ENCODE measurements at regions of chr7 and their contacts with region 1.

Region 1: GRCh38 chr7:135558337-135558767 is 635 bp downstream of the NUP205 start:
- DNase-seq: peak; percentile 46
- ATAC-seq: peak; percentile 56
- H3K4me3 Mint-ChIP-seq: no peak overlapping the region
- H3K27ac Mint-ChIP-seq: no peak overlapping the region
- H3K4me1 Mint-ChIP-seq: peaks cover 16% of the 10 kb centered on the region
- H3K27me3 Mint-ChIP-seq: no peaks in the 10 kb centered on the region
- CTCF ChIP-seq: peak; percentile 29

Region 2: DNA sequence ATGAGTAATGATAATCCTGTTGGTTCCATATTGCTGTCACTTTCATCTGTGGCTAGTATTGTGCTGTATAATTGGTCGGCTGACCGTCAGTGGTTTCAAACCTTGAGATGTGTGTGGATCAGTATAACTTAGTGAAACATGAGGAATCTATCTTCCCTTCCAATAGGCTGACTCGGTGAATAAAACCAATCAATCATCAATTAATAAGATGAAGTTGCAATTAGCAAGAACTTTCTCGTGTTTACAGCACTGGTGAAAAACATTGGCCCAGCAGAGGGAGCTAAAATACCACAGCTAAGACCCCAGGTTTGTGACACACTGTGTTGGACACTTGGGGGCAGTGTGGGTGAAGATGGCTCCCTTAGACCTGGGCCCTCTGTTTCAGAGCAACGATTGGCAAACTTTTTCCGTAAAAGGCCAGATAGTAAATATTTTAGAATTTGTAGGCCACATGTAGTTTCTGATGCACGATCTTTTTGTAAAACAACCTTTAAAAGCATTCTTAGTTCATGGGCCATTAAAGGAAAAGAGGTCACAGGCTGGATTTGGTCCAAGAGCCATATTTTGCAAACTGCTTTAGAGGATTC is 276.9 kb before region 1 on chr7:
- CTCF ChIA-PET with region 1: interaction called, 7 read pairs
- POLR2A ChIA-PET with region 1: no interaction called
- intact Hi-C with region 1: loop called (anchors 1 kb)
- DNase-seq: peak; percentile 24
- ATAC-seq: peak; percentile 100
- H3K4me3 Mint-ChIP-seq: no peak overlapping the region
- H3K27ac Mint-ChIP-seq: no peak overlapping the region
- H3K4me1 Mint-ChIP-seq: peaks cover 10% of the 10 kb centered on the region
- H3K27me3 Mint-ChIP-seq: peaks cover 6% of the 10 kb centered on the region
- CTCF ChIP-seq: peak; percentile 98

Region 3: GRCh38 chr7:135414850-135415439 is 143.4 kb before region 1 on chr7:
- CTCF ChIA-PET with region 1: no interaction called
- POLR2A ChIA-PET with region 1: no interaction called
- intact Hi-C with region 1: loop called (anchors 1 kb)
- DNase-seq: no peak
- ATAC-seq: no peak
- H3K4me3 Mint-ChIP-seq: no peak overlapping the region
- H3K27ac Mint-ChIP-seq: no peak overlapping the region
- H3K4me1 Mint-ChIP-seq: no peaks in the 10 kb centered on the region
- H3K27me3 Mint-ChIP-seq: no peaks in the 10 kb centered on the region
- CTCF ChIP-seq: no peak

Region 4: DNA sequence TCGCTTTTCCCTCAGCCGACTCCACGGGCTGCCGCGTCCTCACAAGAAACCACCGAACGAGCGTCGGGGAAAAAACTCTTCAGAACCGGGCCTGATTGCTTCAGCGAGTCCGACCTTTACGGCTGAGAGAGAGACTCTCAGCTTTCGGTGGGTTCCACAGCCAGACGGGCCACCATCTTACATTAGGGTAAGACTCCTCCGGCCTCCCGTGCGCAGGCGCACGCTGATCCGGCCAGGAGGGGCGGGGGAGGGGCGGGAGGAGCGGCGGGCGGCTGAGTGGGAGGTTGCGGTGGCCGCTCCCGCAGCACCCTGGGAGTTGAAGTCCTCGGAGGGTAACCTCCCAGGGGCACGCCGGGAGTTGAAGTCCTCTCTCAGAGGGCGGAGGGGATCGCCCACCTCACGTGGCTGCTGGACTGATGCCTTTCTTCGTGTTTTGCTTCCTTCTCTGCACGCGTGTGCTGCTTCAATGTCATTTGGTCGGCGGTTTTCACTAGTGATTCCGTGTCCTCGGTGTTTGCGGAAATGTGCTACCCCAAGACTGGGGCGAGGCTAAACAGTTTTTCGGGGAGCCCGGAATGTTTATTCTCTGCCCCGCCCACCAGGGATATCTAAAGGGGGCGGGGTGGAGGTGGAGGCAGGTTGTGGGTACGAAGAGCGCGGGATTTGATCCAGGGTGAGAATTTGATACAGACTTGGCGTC is 48.3 kb before region 1 on chr7 and contains the start of gene CNOT4:
- CTCF ChIA-PET with region 1: no interaction called
- POLR2A ChIA-PET with region 1: interaction called, 4 read pairs
- intact Hi-C with region 1: loop called (anchors 1 kb)
- DNase-seq: peak; percentile 87
- ATAC-seq: peak; percentile 96
- H3K4me3 Mint-ChIP-seq: no peak within 1 kb of the TSS
- H3K27ac Mint-ChIP-seq: no peak within 1 kb of the TSS
- H3K4me1 Mint-ChIP-seq: peaks cover 10% of the 10 kb centered on the region
- H3K27me3 Mint-ChIP-seq: no peaks in the 10 kb centered on the region
- CTCF ChIP-seq: no peak
- total RNA-seq, gene CNOT4: 34.4 and 36.8 TPM in 2 replicates

Region 5: GRCh38 chr7:135575296-135575695 is 16.9 kb after region 1 on chr7:
- CTCF ChIA-PET with region 1: no interaction called
- POLR2A ChIA-PET with region 1: no interaction called
- intact Hi-C with region 1: loop called (anchors 2 kb)
- DNase-seq: no peak
- ATAC-seq: peak; percentile 37
- H3K4me3 Mint-ChIP-seq: no peak overlapping the region
- H3K27ac Mint-ChIP-seq: no peak overlapping the region
- H3K4me1 Mint-ChIP-seq: peaks cover 20% of the 10 kb centered on the region
- H3K27me3 Mint-ChIP-seq: no peaks in the 10 kb centered on the region
- CTCF ChIP-seq: no peak

Region 6: GRCh38 chr7:135662373-135663114 is 104.2 kb after region 1 on chr7 and contains the start of gene STMP1:
- CTCF ChIA-PET with region 1: no interaction called
- POLR2A ChIA-PET with region 1: no interaction called
- intact Hi-C with region 1: loop called (anchors 1 kb)
- DNase-seq: peak; percentile 96
- ATAC-seq: peak; percentile 98
- H3K4me3 Mint-ChIP-seq: peak within 1 kb of the TSS; percentile 91
- H3K27ac Mint-ChIP-seq: peak within 1 kb of the TSS; percentile 79
- H3K4me1 Mint-ChIP-seq: peaks cover 39% of the 10 kb centered on the region
- H3K27me3 Mint-ChIP-seq: no peaks in the 10 kb centered on the region
- CTCF ChIP-seq: no peak
- total RNA-seq, gene STMP1: 24.2 and 26.2 TPM in 2 replicates

Region 7: DNA sequence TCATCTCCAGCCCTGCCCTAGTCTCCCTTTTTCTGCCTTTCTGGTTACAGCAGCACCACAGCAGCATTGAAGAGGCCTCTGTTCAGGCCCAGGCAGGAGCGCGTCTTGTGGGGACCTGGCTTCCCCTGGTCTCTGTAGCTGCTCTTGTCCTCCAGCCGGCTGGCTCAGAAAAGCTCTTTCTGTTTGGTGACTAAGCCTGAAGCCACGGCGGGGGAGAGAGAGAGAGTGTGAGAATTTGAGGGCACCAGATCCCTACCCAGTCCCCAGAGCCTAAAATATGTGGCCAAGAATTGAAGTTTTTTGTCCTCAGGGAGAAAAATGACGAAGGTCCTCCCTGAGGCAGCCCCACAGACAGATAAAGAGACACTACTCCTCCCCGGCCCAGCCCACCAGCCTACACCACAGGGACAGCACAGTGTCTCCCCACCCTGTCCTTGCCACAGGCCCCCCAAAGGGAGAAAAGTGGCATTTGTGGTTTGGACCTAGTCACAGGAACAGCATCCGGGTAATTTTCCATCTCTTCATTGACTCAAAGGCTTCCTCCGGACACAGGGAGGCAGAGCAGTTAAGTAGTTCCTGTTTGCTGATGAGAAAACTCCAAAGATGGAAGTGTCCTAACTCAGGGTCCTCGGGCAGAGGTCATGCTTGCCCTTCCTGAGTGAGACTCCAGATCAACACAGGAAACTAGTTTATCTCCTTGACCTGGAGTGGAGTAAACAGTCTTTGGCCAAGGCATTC is 203.6 kb after region 1 on chr7:
- CTCF ChIA-PET with region 1: no interaction called
- POLR2A ChIA-PET with region 1: no interaction called
- intact Hi-C with region 1: no loop called
- DNase-seq: no peak
- ATAC-seq: no peak
- H3K4me3 Mint-ChIP-seq: no peak overlapping the region
- H3K27ac Mint-ChIP-seq: no peak overlapping the region
- H3K4me1 Mint-ChIP-seq: no peaks in the 10 kb centered on the region
- H3K27me3 Mint-ChIP-seq: peaks cover 33% of the 10 kb centered on the region
- CTCF ChIP-seq: no peak

Measured in activated B cell treated with CpG ODN at 0.5 μM for 24 hours (primary cell).